ENCODE measurements at regions of chr2 and their contacts with region 1.

Region 1: DNA sequence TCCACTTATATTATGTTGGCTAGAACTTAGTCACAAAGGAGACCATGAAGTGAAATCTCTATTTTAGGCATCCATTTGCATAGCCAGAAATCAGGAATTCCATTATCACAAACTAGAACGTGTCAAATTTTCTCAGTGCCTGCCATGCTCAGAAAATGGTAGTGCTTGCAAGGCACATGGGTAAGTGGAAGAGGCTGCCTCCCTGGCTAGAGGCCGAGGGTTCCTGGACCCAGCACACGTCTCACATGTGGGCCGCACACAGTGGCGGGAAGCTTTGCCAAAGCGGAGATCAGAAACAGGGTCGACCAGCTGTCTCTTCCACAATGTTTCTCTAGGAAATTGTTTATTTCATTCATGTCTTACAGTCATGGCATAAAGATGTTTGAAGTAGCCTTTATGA is 42.3 kb downstream of the TRAF3IP1 start:
- DNase-seq: peak in 2 of 3 donors; percentile 67 to 68
- ATAC-seq: peak; percentile 41 to 55
- H3K4me3 ChIP-seq: no peak overlapping the region
- H3K27ac ChIP-seq: no peak overlapping the region
- H3K4me1 ChIP-seq: no peaks in the 10 kb centered on the region
- H3K27me3 ChIP-seq: no peaks in the 10 kb centered on the region

Region 2: GRCh38 chr2:238771218-238771617 is 408.6 kb after region 1 on chr2:
- intact Hi-C with region 1: loop called in 1 of 4 experiments (anchors 5 kb)
- DNase-seq: no peak
- ATAC-seq: no peak
- H3K4me3 ChIP-seq: no peak overlapping the region
- H3K27ac ChIP-seq: no peak overlapping the region
- H3K4me1 ChIP-seq: no peaks in the 10 kb centered on the region
- H3K27me3 ChIP-seq: no peaks in the 10 kb centered on the region

Measured in right cardiac atrium (tissue), 5 donors.